T-cell (primary cell): ENCODE measurements at regions of chr14 and their contacts with region 1.

Region 1: GRCh38 chr14:92039719-92040430 is at the start of gene TRIP11:
- DNase-seq: peak; percentile 84 to 96 (median 93)
- ATAC-seq: peak; percentile 91 to 97 (median 96)
- H3K4me3 ChIP-seq: peak within 1 kb of the TSS; percentile 73 to 84
- H3K4me3 Mint-ChIP-seq: peak within 1 kb of the TSS; percentile 97 to 100 (median 98)
- H3K27ac ChIP-seq: peak within 1 kb of the TSS; percentile 90
- H3K27ac Mint-ChIP-seq: peak within 1 kb of the TSS; percentile 97
- H3K4me1 ChIP-seq: peaks cover 22 to 26% of the 10 kb centered on the region in 2 experiments
- H3K4me1 Mint-ChIP-seq: peaks cover 44 to 57% (median 53%) of the 10 kb centered on the region in 3 donors
- H3K27me3 ChIP-seq: no peaks in the 10 kb centered on the region
- H3K27me3 Mint-ChIP-seq: no peaks in the 10 kb centered on the region
- total RNA-seq, gene TRIP11: 52.7 to 58.3 (median 54.8) TPM

Region 2: GRCh38 chr14:92088494-92088893 is 48.6 kb after region 1 on chr14:
- CTCF ChIA-PET with region 1: no interaction called
- POLR2A ChIA-PET with region 1: interaction called in 1 of 2 experiments, 10 read pairs
- DNase-seq: no peak
- ATAC-seq: no peak
- H3K4me3 ChIP-seq: no peak overlapping the region
- H3K4me3 Mint-ChIP-seq: no peak overlapping the region
- H3K27ac ChIP-seq: no peak overlapping the region
- H3K27ac Mint-ChIP-seq: no peak overlapping the region
- H3K4me1 ChIP-seq: no peaks in the 10 kb centered on the region
- H3K4me1 Mint-ChIP-seq: no peaks in the 10 kb centered on the region
- H3K27me3 ChIP-seq: no peaks in the 10 kb centered on the region
- H3K27me3 Mint-ChIP-seq: no peaks in the 10 kb centered on the region

Region 3: GRCh38 chr14:92106143-92106926 is 66.5 kb after region 1 on chr14 and contains the start of gene ATXN3:
- CTCF ChIA-PET with region 1: interaction called in 1 of 2 experiments, 33 read pairs
- POLR2A ChIA-PET with region 1: interaction called in 1 of 2 experiments, 10 read pairs
- DNase-seq: peak; percentile 82 to 98 (median 94)
- ATAC-seq: peak; percentile 92 to 94 (median 94)
- H3K4me3 ChIP-seq: peak within 1 kb of the TSS; percentile 83 to 90
- H3K4me3 Mint-ChIP-seq: peak within 1 kb of the TSS; percentile 90 to 99 (median 96)
- H3K27ac ChIP-seq: peak within 1 kb of the TSS; percentile 47
- H3K27ac Mint-ChIP-seq: peak within 1 kb of the TSS; percentile 93
- H3K4me1 ChIP-seq: peaks cover 14 to 29% of the 10 kb centered on the region in 2 experiments
- H3K4me1 Mint-ChIP-seq: peaks cover 55 to 61% (median 56%) of the 10 kb centered on the region in 3 donors
- H3K27me3 ChIP-seq: no peaks in the 10 kb centered on the region
- H3K27me3 Mint-ChIP-seq: no peaks in the 10 kb centered on the region
- total RNA-seq, gene ATXN3: 31.0 to 50.2 (median 41.8) TPM

Region 4: GRCh38 chr14:92121670-92122350 is 81.9 kb after region 1 on chr14 and contains the starts of genes CPSF2 and NDUFB1:
- CTCF ChIA-PET with region 1: interaction called in 1 of 2 experiments, 14 read pairs
- POLR2A ChIA-PET with region 1: interaction called, 4 to 14 read pairs
- DNase-seq: peak; percentile 48 to 89 (median 77)
- ATAC-seq: peak; percentile 89 to 91 (median 90)
- H3K4me3 ChIP-seq: peak within 1 kb of the TSS; percentile 66 to 94
- H3K4me3 Mint-ChIP-seq: peak within 1 kb of the TSS; percentile 98 to 99 (median 98)
- H3K27ac ChIP-seq: peak within 1 kb of the TSS; percentile 81
- H3K27ac Mint-ChIP-seq: peak within 1 kb of the TSS; percentile 100
- H3K4me1 ChIP-seq: peaks cover 18 to 26% of the 10 kb centered on the region in 2 experiments
- H3K4me1 Mint-ChIP-seq: peaks cover 42 to 52% (median 50%) of the 10 kb centered on the region in 3 donors
- H3K27me3 ChIP-seq: no peaks in the 10 kb centered on the region
- H3K27me3 Mint-ChIP-seq: no peaks in the 10 kb centered on the region
- total RNA-seq, gene CPSF2: 27.6 to 57.4 (median 45.5) TPM
- total RNA-seq, gene NDUFB1: 40.1 to 81.1 (median 75.0) TPM